B cell (primary cell): ENCODE measurements at regions of chr14 and their contacts with region 1.

Region 1: GRCh38 chr14:51846631-51847488 is 13.6 kb upstream of the GNG2 start:
- DNase-seq: peak; percentile 96
- ATAC-seq: peak; percentile 79
- H3K4me3 ChIP-seq: peak overlapping the region; percentile 57 to 89 (median 72)
- H3K4me3 Mint-ChIP-seq: peak overlapping the region; percentile 86
- H3K27ac ChIP-seq: peak overlapping the region; percentile 98
- H3K27ac Mint-ChIP-seq: peak overlapping the region; percentile 97
- H3K4me1 ChIP-seq: peaks cover 50 to 63% of the 10 kb centered on the region in 2 donors
- H3K4me1 Mint-ChIP-seq: peaks cover 75% of the 10 kb centered on the region
- H3K27me3 ChIP-seq: no peaks in the 10 kb centered on the region
- H3K27me3 Mint-ChIP-seq: no peaks in the 10 kb centered on the region
- CTCF ChIP-seq: no peak

Region 2: GRCh38 chr14:50823051-50823761 is 1023.7 kb before region 1 on chr14:
- CTCF ChIA-PET with region 1: no interaction called
- POLR2A ChIA-PET with region 1: no interaction called
- intact Hi-C with region 1: loop called (anchors 5 kb)
- DNase-seq: peak; percentile 52
- ATAC-seq: peak; percentile 41
- H3K4me3 ChIP-seq: peak overlapping the region; percentile 23 to 60 (median 42)
- H3K4me3 Mint-ChIP-seq: peak overlapping the region; percentile 85
- H3K27ac ChIP-seq: peak overlapping the region; percentile 71 to 92
- H3K27ac Mint-ChIP-seq: peak overlapping the region; percentile 92
- H3K4me1 ChIP-seq: peaks cover 78 to 86% of the 10 kb centered on the region in 2 donors
- H3K4me1 Mint-ChIP-seq: peaks cover 91% of the 10 kb centered on the region
- H3K27me3 ChIP-seq: no peaks in the 10 kb centered on the region
- H3K27me3 Mint-ChIP-seq: no peaks in the 10 kb centered on the region
- CTCF ChIP-seq: no peak

Region 3: DNA sequence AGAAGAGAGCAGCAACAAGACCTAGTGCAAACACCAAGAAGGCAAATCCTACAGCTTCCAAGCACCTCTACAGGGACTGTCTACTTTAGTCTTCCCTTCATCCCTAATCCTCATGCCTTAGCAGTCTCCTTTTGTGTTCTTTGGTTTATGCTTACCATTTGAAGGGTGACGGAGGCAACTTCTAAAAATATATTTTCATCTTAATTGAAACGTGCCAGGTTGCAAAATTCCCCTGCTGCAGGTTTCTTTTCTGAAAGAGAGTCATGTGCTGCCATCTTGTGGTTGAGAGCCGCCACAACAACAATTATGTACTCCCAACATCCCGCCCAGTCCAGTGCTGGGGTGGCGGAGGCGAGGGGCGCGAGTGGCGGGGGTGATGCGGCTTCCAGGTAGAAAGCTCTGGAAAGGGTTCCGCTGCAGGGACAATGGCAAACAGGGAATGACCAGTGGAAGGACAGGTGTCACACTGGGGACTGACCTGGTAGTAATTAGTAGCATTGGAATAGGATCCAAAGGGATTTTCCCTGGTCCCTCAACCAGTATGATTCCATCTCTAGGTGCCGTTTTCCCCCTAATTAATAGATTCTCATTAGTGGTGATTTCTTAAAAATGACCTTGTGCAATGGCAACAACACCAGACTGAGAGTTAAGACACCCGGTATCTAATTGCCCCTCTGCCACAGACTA is 66.7 kb before region 1 on chr14:
- CTCF ChIA-PET with region 1: interaction called, 3 read pairs
- POLR2A ChIA-PET with region 1: no interaction called
- intact Hi-C with region 1: loop called (anchors 1 kb)
- DNase-seq: peak; percentile 80
- ATAC-seq: peak; percentile 80
- H3K4me3 ChIP-seq: no peak overlapping the region
- H3K4me3 Mint-ChIP-seq: no peak overlapping the region
- H3K27ac ChIP-seq: no peak overlapping the region
- H3K27ac Mint-ChIP-seq: no peak overlapping the region
- H3K4me1 ChIP-seq: peaks cover 7 to 11% of the 10 kb centered on the region in 2 donors
- H3K4me1 Mint-ChIP-seq: peaks cover 10% of the 10 kb centered on the region
- H3K27me3 ChIP-seq: peaks cover 0 to 16% (median 4%) of the 10 kb centered on the region in 4 experiments
- H3K27me3 Mint-ChIP-seq: peaks cover 32% of the 10 kb centered on the region
- CTCF ChIP-seq: peak; percentile 90

Region 4: DNA sequence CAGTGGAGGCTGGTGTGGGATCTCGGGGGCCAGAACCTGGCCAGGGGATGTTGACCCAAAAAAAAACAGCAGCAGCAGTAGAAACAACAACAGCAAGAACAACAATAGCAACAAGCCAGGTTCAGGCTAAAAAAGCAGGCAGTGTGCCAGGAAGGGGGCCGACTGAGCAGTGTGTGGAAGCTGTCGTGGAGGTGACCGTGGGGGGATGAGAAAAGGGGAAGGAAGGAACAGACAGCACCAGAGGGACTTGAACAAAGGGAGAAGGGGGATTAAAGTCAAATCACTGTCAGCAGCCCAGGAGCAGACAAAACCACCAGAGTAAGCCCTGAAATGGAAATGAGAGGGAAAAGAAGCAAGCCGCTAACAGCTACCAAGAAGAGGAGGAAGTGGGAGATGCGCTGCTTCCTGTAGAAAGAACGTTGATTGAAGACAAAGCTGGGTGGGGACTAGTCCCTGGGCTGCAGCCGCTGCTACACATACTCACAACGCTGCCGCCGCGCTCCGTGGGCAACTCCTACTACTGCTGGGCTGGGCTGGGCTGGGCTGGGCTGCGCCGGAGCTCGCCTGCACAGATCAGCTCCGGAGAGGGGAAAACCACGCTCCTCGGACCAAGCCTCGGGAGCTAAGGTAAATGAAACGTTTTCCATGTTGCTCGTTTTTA is 13.4 kb after region 1 on chr14 and contains the start of gene GNG2:
- CTCF ChIA-PET with region 1: interaction called, 34 read pairs
- POLR2A ChIA-PET with region 1: interaction called, 20 read pairs
- intact Hi-C with region 1: loop called (anchors 1 kb)
- DNase-seq: peak; percentile 87
- ATAC-seq: peak; percentile 96
- H3K4me3 ChIP-seq: peak within 1 kb of the TSS; percentile 77 to 95 (median 86)
- H3K4me3 Mint-ChIP-seq: peak within 1 kb of the TSS; percentile 92
- H3K27ac ChIP-seq: peak within 1 kb of the TSS; percentile 80 to 84
- H3K27ac Mint-ChIP-seq: peak within 1 kb of the TSS; percentile 87
- H3K4me1 ChIP-seq: peaks cover 37 to 46% of the 10 kb centered on the region in 2 donors
- H3K4me1 Mint-ChIP-seq: peaks cover 68% of the 10 kb centered on the region
- H3K27me3 ChIP-seq: no peaks in the 10 kb centered on the region
- H3K27me3 Mint-ChIP-seq: no peaks in the 10 kb centered on the region
- CTCF ChIP-seq: no peak
- total RNA-seq, gene GNG2: 57.6 and 69.8 TPM in 2 replicates

Region 5: DNA sequence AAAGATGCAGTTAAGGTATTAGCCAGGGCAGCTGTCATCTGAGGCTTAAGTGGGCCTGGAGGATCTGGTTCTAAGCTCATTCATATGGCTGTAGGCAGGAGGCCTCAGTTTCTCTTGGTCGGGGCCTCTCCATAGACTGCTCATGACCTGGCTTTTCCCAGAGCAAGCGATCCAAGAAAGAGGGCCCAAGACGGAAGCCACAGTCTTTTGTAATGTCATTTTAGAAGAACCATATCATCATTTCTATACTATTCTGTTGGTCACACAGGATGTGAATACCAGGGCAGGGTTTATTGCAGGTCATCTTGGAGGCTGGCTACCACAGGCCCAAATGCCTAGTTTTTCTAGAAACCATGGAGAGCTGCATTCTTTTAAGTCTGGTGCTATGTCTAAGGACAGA is 61.2 kb after region 1 on chr14:
- CTCF ChIA-PET with region 1: no interaction called
- POLR2A ChIA-PET with region 1: no interaction called
- intact Hi-C with region 1: loop called (anchors 1 kb)
- DNase-seq: no peak
- ATAC-seq: no peak
- H3K4me3 ChIP-seq: no peak overlapping the region
- H3K4me3 Mint-ChIP-seq: no peak overlapping the region
- H3K27ac ChIP-seq: no peak overlapping the region
- H3K27ac Mint-ChIP-seq: no peak overlapping the region
- H3K4me1 ChIP-seq: peaks cover 6 to 14% of the 10 kb centered on the region in 2 donors
- H3K4me1 Mint-ChIP-seq: peaks cover 24% of the 10 kb centered on the region
- H3K27me3 ChIP-seq: no peaks in the 10 kb centered on the region
- H3K27me3 Mint-ChIP-seq: no peaks in the 10 kb centered on the region
- CTCF ChIP-seq: no peak

Region 6: DNA sequence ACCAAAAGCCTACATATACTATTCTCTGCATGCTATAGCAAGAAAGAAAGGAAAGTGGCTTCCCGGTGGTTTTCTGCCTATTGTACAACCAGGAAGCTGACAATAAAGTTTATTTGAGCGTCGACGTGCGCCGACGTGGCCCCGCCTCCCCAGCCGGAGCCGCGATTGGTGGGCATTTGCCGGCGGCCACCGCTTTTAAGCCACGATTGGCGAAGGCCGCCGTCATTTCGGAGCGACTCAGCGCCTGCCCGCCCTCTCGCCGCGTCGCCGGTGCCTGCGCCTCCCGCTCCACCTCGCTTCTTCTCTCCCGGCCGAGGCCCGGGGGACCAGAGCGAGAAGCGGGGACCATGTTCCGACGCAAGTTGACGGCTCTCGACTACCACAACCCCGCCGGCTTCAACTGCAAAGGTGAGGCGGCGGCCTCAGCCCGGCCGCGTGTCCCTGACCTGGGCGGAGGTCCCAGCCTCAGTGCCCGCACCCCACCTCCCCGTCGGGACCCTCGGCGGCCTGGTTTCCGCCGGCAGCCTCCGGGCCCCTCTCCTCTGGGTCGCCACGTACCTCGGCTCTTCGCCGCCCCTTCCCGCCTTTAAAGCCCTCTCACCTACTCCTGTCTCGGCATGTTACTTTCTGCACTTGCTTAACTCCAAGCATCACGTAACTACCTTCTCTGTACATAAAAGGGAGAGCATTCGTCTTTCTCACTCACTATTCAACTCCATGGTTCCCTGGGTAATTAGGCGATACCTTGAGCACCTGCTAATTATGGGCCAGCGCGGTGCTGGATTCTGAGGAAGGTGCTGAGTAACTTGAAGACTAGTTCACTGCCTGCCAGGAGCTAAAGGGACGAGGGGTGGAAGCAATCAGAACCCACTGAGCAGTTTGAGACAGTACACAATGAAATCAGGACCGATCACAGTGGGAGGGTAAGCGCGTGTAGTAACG is 142.7 kb after region 1 on chr14 and contains the start of gene RTRAF:
- CTCF ChIA-PET with region 1: no interaction called
- POLR2A ChIA-PET with region 1: no interaction called
- intact Hi-C with region 1: loop called (anchors 1 kb)
- DNase-seq: peak; percentile 95
- ATAC-seq: peak; percentile 96
- H3K4me3 ChIP-seq: peak within 1 kb of the TSS; percentile 72 to 94 (median 77)
- H3K4me3 Mint-ChIP-seq: peak within 1 kb of the TSS; percentile 98
- H3K27ac ChIP-seq: peak within 1 kb of the TSS; percentile 67 to 95
- H3K27ac Mint-ChIP-seq: peak within 1 kb of the TSS; percentile 91
- H3K4me1 ChIP-seq: peaks cover 15 to 24% of the 10 kb centered on the region in 2 donors
- H3K4me1 Mint-ChIP-seq: peaks cover 34% of the 10 kb centered on the region
- H3K27me3 ChIP-seq: no peaks in the 10 kb centered on the region
- H3K27me3 Mint-ChIP-seq: no peaks in the 10 kb centered on the region
- CTCF ChIP-seq: no peak
- total RNA-seq, gene RTRAF: 91.1 and 94.2 TPM in 2 replicates

Region 7: DNA sequence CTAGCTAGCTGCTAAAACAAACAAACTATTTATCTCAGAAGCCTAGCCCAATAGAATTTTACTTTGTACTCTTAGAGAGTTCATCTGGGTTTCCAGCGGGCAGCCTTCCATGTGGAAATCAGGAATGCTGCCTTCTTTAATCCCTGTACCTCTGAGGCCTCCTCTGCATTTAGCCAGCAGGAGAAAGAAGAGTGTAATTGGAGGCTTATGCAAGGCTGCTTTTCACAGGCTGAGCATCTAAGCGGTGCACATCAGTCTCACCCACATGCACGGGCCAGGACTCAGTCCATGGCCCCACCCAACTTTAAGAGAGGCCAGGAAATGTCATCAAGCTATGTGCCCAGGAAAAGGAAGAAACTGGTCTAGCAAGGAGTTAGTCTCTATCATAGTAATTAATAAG is 406.6 kb after region 1 on chr14:
- CTCF ChIA-PET with region 1: no interaction called
- POLR2A ChIA-PET with region 1: no interaction called
- intact Hi-C with region 1: no loop called
- DNase-seq: no peak
- ATAC-seq: no peak
- H3K4me3 ChIP-seq: no peak overlapping the region
- H3K4me3 Mint-ChIP-seq: no peak overlapping the region
- H3K27ac ChIP-seq: no peak overlapping the region
- H3K27ac Mint-ChIP-seq: no peak overlapping the region
- H3K4me1 ChIP-seq: no peaks in the 10 kb centered on the region
- H3K4me1 Mint-ChIP-seq: no peaks in the 10 kb centered on the region
- H3K27me3 ChIP-seq: peaks cover 0 to 9% (median 4%) of the 10 kb centered on the region in 4 experiments
- H3K27me3 Mint-ChIP-seq: peaks cover 24% of the 10 kb centered on the region
- CTCF ChIP-seq: no peak

Region 8: DNA sequence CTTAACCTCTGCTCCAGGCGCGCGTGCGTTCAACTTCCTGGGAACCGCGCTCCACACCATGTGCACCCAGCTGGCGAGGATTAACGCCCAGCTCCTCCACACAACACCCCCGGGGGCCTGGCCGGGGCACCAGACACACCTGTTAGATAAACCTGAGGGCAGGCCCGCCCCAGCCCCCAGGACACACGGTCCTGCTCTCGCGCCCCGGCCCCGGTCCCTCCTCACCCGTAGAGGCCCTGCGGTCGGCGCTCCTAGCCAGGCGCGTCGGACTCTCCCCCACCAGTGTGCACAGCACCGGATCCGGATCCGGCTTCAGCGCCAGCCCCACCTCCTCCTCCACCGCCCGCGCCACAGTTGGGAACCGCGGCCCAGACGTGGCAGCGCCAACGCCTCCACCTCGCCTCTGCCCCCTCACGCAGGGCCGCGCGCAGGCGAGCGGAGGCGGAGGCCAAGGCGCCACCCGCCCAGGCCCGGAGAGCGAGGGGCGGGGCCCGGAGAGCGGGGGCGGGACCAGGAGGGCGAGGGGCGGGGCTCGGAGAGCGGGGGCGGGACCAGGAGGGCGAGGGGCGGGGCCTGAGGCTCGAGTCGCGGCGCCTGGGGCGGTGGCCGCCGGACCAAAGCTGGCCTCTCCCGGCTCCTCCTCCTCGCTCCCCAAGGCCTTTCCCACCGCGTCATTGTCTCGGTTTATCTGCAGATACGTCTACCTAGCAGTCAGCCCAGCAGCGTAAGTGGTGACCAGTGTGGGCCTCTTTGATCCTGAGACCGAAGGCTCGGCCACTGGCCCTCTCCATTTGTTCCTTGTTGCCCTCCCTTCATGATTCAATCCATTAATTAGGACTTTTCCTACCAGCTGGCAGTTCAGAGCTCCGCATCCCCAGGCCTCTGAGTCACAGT is 944.6 kb after region 1 on chr14 and contains the start of gene GNPNAT1:
- CTCF ChIA-PET with region 1: no interaction called
- POLR2A ChIA-PET with region 1: no interaction called
- intact Hi-C with region 1: loop called (anchors 2 kb)
- DNase-seq: peak; percentile 89
- ATAC-seq: peak; percentile 96
- H3K4me3 ChIP-seq: peak within 1 kb of the TSS; percentile 58 to 87 (median 80)
- H3K4me3 Mint-ChIP-seq: peak within 1 kb of the TSS; percentile 89
- H3K27ac ChIP-seq: peak within 1 kb of the TSS; percentile 35 to 58
- H3K27ac Mint-ChIP-seq: peak within 1 kb of the TSS; percentile 86
- H3K4me1 ChIP-seq: peaks cover 14 to 20% of the 10 kb centered on the region in 2 donors
- H3K4me1 Mint-ChIP-seq: peaks cover 26% of the 10 kb centered on the region
- H3K27me3 ChIP-seq: no peaks in the 10 kb centered on the region
- H3K27me3 Mint-ChIP-seq: no peaks in the 10 kb centered on the region
- CTCF ChIP-seq: no peak
- total RNA-seq, gene GNPNAT1: 7.8 and 8.3 TPM in 2 replicates